ENCODE measurements at regions of chr1 and their contacts with region 1.

Region 1: DNA sequence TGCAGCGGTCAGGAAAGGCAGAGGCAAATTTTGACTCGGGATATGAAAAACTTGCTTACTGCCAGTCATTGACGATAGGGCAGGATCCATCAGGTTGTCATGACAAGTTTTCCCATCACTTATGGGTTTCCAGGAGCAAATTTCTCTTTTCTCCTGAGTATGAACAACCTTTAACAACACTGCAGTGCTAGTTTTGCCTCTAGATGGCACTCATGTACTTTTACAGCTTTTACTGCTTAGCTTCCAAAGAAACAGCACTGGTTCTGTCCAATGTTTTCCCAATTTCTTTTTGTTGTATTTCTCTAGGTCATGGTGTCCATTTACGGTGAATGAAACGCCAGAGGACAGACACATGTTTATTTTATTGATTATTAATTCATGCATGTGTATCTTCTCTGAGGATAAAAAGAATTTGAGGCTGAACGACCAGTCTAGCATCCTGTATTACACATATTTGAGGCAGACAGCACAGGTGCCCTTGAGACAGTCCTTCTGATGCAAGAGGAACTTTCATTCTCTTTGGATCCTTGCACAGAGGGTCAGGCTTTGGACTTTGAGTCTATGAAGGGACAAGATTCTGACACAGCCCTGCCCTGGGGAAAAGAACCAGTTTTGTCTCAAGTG is 112.3 kb upstream of the TRABD2B start:
- DNase-seq: no peak

Region 2: DNA sequence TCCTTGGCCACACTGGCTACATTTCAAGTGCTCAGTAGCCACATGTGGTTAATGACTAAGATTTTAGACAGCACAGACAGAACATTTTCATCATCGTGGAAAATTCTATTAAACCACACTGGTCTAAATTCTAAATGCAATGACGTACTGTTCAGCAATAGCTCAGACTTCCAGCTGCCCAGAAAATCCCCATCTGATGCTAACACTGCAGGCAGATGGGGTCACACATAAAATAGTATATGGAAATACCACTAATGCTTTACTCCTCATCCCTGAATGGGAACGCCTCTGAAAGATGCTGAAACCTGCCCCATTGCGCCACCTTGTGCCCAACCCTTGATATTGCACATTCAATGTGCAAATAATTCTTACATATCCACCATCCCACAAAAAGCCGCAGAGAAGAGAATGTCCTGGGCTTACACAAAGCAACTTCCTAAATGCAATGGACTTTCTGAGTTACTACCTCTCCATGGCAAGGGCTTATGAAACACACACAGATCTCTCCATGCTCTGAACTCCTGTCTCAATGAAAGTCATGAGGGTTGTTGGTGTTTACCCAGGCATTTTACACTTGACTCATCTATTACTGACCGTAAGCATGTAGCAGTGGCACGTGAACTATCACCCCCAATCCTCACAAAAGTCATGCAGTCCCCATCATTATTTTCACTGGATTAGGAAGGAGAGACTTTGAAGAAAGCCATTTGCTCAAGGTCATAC is 92.7 kb after region 1 on chr1:
- intact Hi-C with region 1: loop called (anchors 1 kb)
- DNase-seq: peak; percentile 87

Region 3: GRCh38 chr1:48495911-48496310 is 386.4 kb after region 1 on chr1:
- intact Hi-C with region 1: loop called (anchors 2 kb)
- DNase-seq: no peak

Measured in cardiac septum (tissue), 1 donor.